Left ventricle myocardium superior (tissue), 1 donor: ENCODE measurements at regions of chr11 and their contacts with region 1.

Region 1: DNA sequence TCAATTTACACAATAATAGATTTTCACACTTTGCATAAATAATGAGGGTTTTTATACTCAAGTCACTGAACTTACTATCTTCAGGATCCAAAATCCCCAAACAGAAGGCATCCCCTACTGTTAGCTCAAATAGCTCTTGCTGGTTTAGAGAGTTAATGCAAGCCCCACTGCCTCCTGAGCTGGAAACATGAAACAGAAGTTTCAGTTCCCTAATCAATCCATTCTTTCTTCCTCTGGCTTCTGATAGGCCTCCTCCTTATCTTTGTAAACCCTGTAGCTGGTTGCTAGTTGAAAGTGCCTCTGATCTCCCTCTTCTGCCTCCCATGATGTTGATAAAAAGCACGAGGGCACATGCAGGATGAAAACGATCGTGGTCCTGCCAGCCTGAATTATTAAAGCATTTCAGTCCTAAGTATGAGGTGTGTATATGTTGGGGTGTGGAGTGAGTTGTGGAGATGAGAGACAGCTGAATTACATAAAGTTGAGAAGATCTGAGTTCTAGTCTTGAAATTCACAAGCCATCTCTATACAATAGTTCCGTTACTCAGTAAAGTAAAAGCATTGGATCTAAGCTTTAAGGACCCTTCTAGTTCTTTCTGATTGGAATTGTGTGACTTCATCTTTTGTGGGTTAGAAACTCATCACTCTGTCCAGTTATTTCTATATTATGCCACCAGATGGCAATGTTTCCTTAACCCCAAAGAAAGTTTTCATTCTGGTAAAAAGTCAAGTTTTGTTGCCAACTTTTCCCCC is 35.0 kb upstream of the EHF start:
- DNase-seq: no peak
- ATAC-seq: peak; percentile 45

Region 2: DNA sequence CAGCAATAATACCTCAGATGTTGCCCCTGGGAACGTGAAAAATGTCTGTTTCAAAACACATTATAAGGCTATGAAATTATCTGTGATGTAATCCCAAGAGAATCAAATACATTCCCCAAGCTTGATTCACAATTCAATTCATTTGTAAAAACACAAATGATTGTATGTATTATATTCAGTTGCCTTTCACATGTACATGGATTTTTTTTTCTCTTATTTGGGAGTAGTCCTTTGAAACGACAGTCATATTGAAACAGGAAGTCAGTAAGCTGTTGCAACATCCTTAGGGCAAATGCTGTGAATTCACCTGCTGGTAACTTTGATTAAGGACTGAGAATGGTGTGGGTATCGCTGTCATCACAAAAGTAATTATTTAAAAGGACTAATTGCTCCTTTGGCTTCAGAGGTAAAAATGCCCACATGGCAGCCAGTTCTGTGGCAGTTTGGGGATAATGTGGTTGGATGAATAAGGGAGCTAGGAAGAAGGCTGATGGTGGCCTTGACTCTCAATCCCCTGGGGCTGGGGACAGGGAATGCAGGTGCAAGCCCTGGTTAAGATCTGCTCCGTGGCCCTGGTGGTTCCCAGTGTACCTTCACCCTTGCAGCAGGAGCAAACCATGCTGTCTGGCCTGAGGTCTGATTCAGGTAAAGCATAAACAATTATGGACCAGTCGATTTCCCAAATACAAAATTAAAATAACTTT is 48.2 kb after region 1 on chr11:
- intact Hi-C with region 1: no loop called
- DNase-seq: no peak
- ATAC-seq: no peak

Region 3: GRCh38 chr11:34685864-34686263 is 100.0 kb after region 1 on chr11:
- intact Hi-C with region 1: no loop called
- DNase-seq: no peak
- ATAC-seq: no peak

Region 4: GRCh38 chr11:34890812-34891211 is 304.9 kb after region 1 on chr11:
- intact Hi-C with region 1: loop called (anchors 2 kb)
- DNase-seq: no peak
- ATAC-seq: no peak

Region 5: GRCh38 chr11:35111161-35112055 is 525.5 kb after region 1 on chr11:
- intact Hi-C with region 1: no loop called
- DNase-seq: peak; percentile 21
- ATAC-seq: peak; percentile 77